ENCODE measurements at regions of chr19 and their contacts with region 1.

Region 1: GRCh38 chr19:18588611-18589379 is at the start of gene REX1BD:
- DNase-seq: peak; percentile 77 to 92 (median 89)
- ATAC-seq: peak; percentile 89
- H3K4me3 ChIP-seq: peak within 1 kb of the TSS; percentile 72
- H3K4me3 Mint-ChIP-seq: peak within 1 kb of the TSS; percentile 80 to 95 (median 92)
- H3K27ac ChIP-seq: peak within 1 kb of the TSS; percentile 88
- H3K27ac Mint-ChIP-seq: peak within 1 kb of the TSS; percentile 89 to 96 (median 93)
- H3K4me1 ChIP-seq: peaks cover 18 to 33% of the 10 kb centered on the region in 2 donors
- H3K4me1 Mint-ChIP-seq: peaks cover 20 to 56% (median 42%) of the 10 kb centered on the region in 7 donors
- H3K27me3 ChIP-seq: no peaks in the 10 kb centered on the region
- H3K27me3 Mint-ChIP-seq: peaks cover 0 to 3% (median 0%) of the 10 kb centered on the region in 5 donors
- total RNA-seq, gene REX1BD: 83.9 to 152 (median 116) TPM

Region 2: DNA sequence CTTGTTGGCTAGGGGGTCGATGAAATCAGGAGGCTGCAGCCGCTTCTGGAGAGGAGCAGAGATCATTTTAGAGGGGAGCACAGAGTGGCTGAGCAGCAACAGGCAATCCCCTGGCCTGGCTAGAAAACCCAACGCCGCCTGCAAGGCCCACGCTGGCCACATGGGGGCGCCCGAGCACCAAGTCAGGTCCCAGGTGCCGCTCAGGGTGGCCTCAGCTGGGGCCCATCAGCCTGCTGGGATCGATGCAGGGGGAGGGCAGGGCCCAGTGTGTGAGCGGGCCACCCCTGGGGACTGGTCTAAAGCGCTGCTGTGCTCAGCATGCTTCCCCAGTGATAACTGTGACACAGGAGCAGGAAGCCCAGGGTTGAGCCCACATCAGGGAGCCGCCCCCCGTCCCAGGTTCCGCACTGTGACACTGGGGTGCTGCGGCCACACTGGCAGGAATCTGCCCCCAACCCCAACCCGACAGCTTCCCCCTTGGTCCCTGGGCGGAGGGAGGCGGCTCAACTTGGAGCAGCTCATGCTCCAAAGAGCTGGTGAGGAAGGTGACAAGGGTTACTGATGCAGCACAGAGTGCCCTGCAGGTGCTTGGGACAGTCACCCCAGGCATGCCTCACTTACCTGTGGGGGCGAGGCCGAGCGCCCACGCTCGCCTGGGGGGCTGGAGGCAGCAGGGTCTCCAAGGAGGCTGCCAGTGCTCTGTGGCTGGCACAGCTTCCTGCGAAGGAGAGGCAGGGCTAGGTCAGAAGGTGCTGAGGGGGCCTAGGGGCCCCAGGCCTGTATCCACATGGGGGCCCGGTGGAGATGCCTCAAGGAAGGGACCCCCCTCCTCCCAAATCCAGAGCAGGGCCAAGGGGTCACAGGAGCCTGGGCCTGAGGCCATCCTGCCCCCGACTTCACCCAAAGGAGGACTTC is 137.6 kb before region 1 on chr19:
- CTCF ChIA-PET with region 1: interaction called, 3 read pairs
- POLR2A ChIA-PET with region 1: no interaction called
- intact Hi-C with region 1: loop called in 1 of 2 experiments (anchors 10 kb)
- DNase-seq: peak; percentile 70 to 93 (median 83)
- ATAC-seq: peak; percentile 94
- H3K4me3 ChIP-seq: no peak overlapping the region
- H3K4me3 Mint-ChIP-seq: no peak overlapping the region
- H3K27ac ChIP-seq: no peak overlapping the region
- H3K27ac Mint-ChIP-seq: peak overlapping the region in 1 of 9 donors; percentile 76
- H3K4me1 ChIP-seq: no peaks in the 10 kb centered on the region
- H3K4me1 Mint-ChIP-seq: peaks cover 0 to 6% (median 4%) of the 10 kb centered on the region in 7 donors
- H3K27me3 ChIP-seq: no peaks in the 10 kb centered on the region
- H3K27me3 Mint-ChIP-seq: no peaks in the 10 kb centered on the region

Region 3: GRCh38 chr19:18557474-18558201 is 31.2 kb before region 1 on chr19 and contains the start of gene KXD1:
- CTCF ChIA-PET with region 1: interaction called, 5 read pairs
- POLR2A ChIA-PET with region 1: interaction called, 25 read pairs
- intact Hi-C with region 1: loop called (anchors 1 to 2 kb)
- DNase-seq: peak; percentile 89 to 99 (median 97)
- ATAC-seq: peak; percentile 100
- H3K4me3 ChIP-seq: peak within 1 kb of the TSS; percentile 84
- H3K4me3 Mint-ChIP-seq: peak within 1 kb of the TSS; percentile 83 to 93 (median 91)
- H3K27ac ChIP-seq: peak within 1 kb of the TSS; percentile 95
- H3K27ac Mint-ChIP-seq: peak within 1 kb of the TSS; percentile 87 to 97 (median 96)
- H3K4me1 ChIP-seq: peaks cover 13 to 15% of the 10 kb centered on the region in 2 donors
- H3K4me1 Mint-ChIP-seq: peaks cover 6 to 25% (median 23%) of the 10 kb centered on the region in 7 donors
- H3K27me3 ChIP-seq: no peaks in the 10 kb centered on the region
- H3K27me3 Mint-ChIP-seq: no peaks in the 10 kb centered on the region
- total RNA-seq, gene KXD1: 74.7 to 108 (median 99.9) TPM

Region 4: GRCh38 chr19:18683213-18683939 is 94.6 kb after region 1 on chr19 and contains the start of gene CRTC1:
- CTCF ChIA-PET with region 1: no interaction called
- POLR2A ChIA-PET with region 1: interaction called, 4 read pairs
- intact Hi-C with region 1: loop called (anchors 1 to 5 kb)
- DNase-seq: peak; percentile 91 to 98 (median 96)
- ATAC-seq: peak; percentile 94
- H3K4me3 ChIP-seq: peak within 1 kb of the TSS; percentile 92
- H3K4me3 Mint-ChIP-seq: peak within 1 kb of the TSS; percentile 80 to 93 (median 87)
- H3K27ac ChIP-seq: peak within 1 kb of the TSS; percentile 78
- H3K27ac Mint-ChIP-seq: peak within 1 kb of the TSS; percentile 31 to 94 (median 90)
- H3K4me1 ChIP-seq: peaks cover 12 to 16% of the 10 kb centered on the region in 2 donors
- H3K4me1 Mint-ChIP-seq: peaks cover 6 to 45% (median 27%) of the 10 kb centered on the region in 7 donors
- H3K27me3 ChIP-seq: no peaks in the 10 kb centered on the region
- H3K27me3 Mint-ChIP-seq: peaks cover 0 to 3% (median 0%) of the 10 kb centered on the region in 5 donors
- total RNA-seq, gene CRTC1: 8.4 to 23.4 (median 22.3) TPM

Region 5: DNA sequence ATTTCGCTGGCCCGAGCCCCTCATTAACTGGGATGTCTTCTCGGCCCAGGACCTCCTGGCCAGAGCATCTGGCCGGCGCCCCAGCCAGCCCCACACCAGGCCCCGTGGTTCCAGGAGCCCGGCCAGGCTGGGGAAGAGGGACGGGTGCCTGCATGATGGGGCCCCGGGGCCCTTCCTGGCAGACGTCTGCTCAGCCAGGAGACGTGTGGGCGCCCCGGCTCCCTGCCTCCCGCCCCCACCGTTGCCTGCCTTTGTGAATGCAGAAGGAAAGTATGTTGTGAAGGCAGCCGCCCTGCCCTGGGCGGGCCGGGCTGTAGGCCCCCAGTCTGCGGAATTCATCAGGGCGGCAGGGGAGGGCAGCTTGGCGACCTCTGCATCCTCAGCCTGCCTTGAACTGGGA is 206.7 kb after region 1 on chr19:
- CTCF ChIA-PET with region 1: no interaction called
- POLR2A ChIA-PET with region 1: no interaction called
- intact Hi-C with region 1: no loop called
- DNase-seq: no peak
- ATAC-seq: no peak
- H3K4me3 ChIP-seq: no peak overlapping the region
- H3K4me3 Mint-ChIP-seq: no peak overlapping the region
- H3K27ac ChIP-seq: no peak overlapping the region
- H3K27ac Mint-ChIP-seq: no peak overlapping the region
- H3K4me1 ChIP-seq: peaks cover 0 to 5% of the 10 kb centered on the region in 2 donors
- H3K4me1 Mint-ChIP-seq: peaks cover 0 to 7% (median under 1%) of the 10 kb centered on the region in 7 donors
- H3K27me3 ChIP-seq: peaks cover under 1 to 12% of the 10 kb centered on the region in 2 donors
- H3K27me3 Mint-ChIP-seq: peaks cover 35 to 57% (median 45%) of the 10 kb centered on the region in 5 donors

Region 6: DNA sequence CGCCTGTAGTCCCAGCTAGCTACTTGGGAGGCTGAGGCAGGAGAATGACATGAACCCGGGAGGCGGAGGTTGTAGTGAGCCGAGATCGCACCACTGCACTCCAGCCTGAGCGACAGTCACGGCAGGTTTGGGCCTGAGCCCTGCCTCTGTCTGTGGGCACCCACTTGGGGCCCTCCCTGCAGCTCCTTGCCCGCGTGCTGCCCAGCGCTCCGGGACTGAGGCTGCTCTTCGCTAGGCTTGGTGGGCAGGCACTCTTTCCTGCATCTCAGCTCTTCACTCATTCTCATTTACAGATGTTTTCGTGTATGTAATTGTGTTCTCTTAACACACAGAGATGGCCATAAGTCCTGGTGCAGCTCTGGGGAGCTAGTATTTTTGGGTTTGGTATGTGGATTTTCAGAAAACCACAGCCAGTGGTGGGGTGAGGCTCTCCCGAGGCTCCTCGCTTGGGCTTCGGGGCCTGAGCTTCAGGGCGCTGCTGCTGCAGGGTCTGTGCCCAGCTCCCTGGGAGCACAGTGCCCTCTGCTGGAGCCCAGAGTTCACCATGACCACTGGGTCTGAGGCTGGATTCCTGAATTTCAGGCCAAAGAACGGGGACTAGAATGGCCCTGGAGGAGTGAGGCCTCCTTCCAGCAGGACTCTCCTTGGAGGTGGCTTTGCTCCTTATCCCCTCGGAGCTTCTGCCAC is 258.2 kb after region 1 on chr19:
- CTCF ChIA-PET with region 1: interaction called, 20 read pairs
- POLR2A ChIA-PET with region 1: interaction called, 10 read pairs
- intact Hi-C with region 1: loop called in 1 of 2 experiments (anchors 1 kb)
- DNase-seq: peak; percentile 45 to 70 (median 57)
- ATAC-seq: peak; percentile 83
- H3K4me3 ChIP-seq: no peak overlapping the region
- H3K4me3 Mint-ChIP-seq: peak overlapping the region in 8 of 10 donors; percentile 27 to 71 (median 56)
- H3K27ac ChIP-seq: no peak overlapping the region
- H3K27ac Mint-ChIP-seq: peak overlapping the region in 8 of 9 donors; percentile 23 to 83 (median 69)
- H3K4me1 ChIP-seq: peaks cover 32 to 34% of the 10 kb centered on the region in 2 donors
- H3K4me1 Mint-ChIP-seq: peaks cover 49 to 65% (median 54%) of the 10 kb centered on the region in 7 donors
- H3K27me3 ChIP-seq: no peaks in the 10 kb centered on the region
- H3K27me3 Mint-ChIP-seq: no peaks in the 10 kb centered on the region

Measured in naive thymus-derived CD4-positive, alpha-beta T cell (primary cell).